CD8-positive, alpha-beta T cell (primary cell): ENCODE measurements at regions of chr15 and their contacts with region 1.

Region 1: DNA sequence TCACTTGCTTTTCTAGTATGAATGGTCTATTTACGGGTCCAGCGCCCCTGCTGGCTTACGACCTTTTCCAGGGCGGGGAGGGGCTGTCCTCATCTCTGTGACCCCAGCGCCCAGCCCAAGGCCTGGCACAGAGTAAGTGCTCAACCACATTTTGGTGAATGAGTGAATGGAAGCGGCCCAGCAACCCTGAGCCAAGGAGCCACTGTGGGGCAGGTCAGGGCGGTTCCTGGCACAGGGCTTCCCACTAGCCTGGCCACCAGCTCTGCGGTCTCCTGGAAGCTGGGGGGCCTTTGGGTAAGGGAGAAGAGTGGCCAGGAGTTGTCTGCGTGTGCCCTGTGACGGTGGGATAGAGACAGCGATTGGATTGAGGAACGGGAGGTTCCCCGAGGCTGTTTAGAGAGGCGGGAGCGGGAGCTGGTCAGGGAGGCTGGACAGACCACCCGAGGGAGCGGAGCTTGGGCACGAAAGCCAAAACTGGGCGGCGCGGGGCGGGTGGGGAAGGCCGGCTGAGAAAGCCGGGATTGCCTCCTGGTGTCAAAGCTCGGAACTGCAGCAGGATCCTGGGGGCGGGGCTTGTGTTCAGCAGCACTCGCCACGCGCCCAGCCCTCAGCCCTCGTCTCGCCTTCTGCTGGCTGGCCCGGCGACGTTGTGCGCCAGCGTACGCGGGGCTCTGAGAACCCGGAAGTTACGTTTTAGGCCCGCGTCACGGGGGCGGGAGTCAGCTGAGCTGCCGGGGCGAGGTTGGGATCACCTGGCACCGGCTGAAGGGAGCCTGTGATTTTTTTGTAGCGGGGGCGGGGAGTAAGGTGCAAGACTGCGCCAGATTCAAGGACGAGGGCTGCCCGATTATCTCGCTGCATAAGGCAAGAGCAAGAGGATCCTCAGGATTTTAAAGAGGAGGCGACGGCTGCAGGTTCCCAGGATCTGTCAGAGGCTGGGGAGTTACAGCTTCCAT is at the start of gene VPS18:
- DNase-seq: peak; percentile 97 to 99 (median 99)
- ATAC-seq: peak; percentile 97
- H3K4me3 ChIP-seq: peak within 1 kb of the TSS; percentile 85 to 98
- H3K4me3 Mint-ChIP-seq: peak within 1 kb of the TSS; percentile 98
- H3K27ac ChIP-seq: peak within 1 kb of the TSS; percentile 76 to 91
- H3K27ac Mint-ChIP-seq: peak within 1 kb of the TSS; percentile 96
- H3K4me1 ChIP-seq: peaks cover 19% of the 10 kb centered on the region
- H3K4me1 Mint-ChIP-seq: peaks cover 40% of the 10 kb centered on the region
- H3K27me3 ChIP-seq: no peaks in the 10 kb centered on the region
- H3K27me3 Mint-ChIP-seq: no peaks in the 10 kb centered on the region
- CTCF ChIP-seq: peak; percentile 88
- total RNA-seq, gene VPS18: 21.7 to 23.6 TPM

Region 2: GRCh38 chr15:40593588-40594428 is 300.2 kb before region 1 on chr15 and contains the start of gene KNL1:
- CTCF ChIA-PET with region 1: no interaction called
- POLR2A ChIA-PET with region 1: no interaction called
- intact Hi-C with region 1: loop called (anchors 1 to 10 kb)
- DNase-seq: peak; percentile 70 to 96 (median 85)
- ATAC-seq: peak; percentile 83
- H3K4me3 ChIP-seq: peak within 1 kb of the TSS; percentile 76 to 82
- H3K4me3 Mint-ChIP-seq: peak within 1 kb of the TSS; percentile 95
- H3K27ac ChIP-seq: peak within 1 kb of the TSS; percentile 78 to 92
- H3K27ac Mint-ChIP-seq: peak within 1 kb of the TSS; percentile 98
- H3K4me1 ChIP-seq: no peaks in the 10 kb centered on the region
- H3K4me1 Mint-ChIP-seq: peaks cover 20% of the 10 kb centered on the region
- H3K27me3 ChIP-seq: peaks cover 0 to 2% of the 10 kb centered on the region in 2 experiments
- H3K27me3 Mint-ChIP-seq: peaks cover 6% of the 10 kb centered on the region
- CTCF ChIP-seq: no peak
- total RNA-seq, gene KNL1: 0.83 to 0.98 TPM

Region 3: DNA sequence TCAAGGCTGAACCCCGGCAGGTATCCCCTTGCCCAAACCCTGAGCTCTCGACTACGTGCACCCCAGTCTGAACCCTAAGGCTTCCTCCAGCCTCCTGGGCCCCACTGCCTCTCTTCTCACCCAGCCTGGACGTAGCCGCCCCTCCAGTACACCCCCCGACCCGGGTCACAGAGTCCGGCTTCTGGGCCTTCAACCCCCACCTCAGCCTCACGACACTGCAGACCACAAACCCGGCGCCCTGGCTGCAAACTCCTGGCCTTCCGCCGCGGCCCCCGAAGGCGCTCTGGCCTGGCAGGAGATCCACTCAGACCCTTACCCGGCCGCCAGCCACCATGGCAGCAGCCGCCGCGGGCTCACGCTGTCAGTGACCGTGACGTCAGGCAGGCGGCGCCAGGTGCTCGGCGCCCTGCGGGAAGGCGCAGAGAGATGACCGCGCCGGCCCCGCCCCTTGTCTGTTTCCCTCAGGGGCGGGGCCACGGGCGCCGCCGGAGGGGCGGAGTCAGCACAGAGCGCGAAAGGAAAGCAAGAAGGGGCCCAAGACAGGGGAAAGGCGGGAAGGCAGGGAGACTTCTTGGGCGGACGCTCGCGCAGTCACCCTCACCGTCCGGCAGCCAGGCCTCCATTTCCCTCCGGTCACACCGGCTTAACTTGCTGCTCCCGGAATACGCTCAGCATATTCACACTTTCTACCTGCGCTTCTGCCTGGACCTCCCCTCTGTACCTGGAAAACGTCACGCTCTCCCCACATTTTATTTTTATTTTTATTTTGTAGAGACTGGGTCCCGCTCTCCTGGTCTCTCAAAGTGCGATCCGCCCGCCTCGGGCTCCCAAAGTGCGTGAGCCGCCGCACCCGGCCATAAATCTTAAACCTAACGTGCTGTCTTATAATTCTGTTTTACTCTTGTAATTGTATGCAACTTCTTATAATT is 138.9 kb before region 1 on chr15 and contains the start of gene RMDN3:
- CTCF ChIA-PET with region 1: interaction called, 4 read pairs
- POLR2A ChIA-PET with region 1: no interaction called
- intact Hi-C with region 1: loop called (anchors 1 to 2 kb)
- DNase-seq: peak; percentile 84 to 96 (median 93)
- ATAC-seq: peak; percentile 95
- H3K4me3 ChIP-seq: peak within 1 kb of the TSS; percentile 99
- H3K4me3 Mint-ChIP-seq: peak within 1 kb of the TSS; percentile 94
- H3K27ac ChIP-seq: peak within 1 kb of the TSS; percentile 91 to 94
- H3K27ac Mint-ChIP-seq: peak within 1 kb of the TSS; percentile 94
- H3K4me1 ChIP-seq: peaks cover 6% of the 10 kb centered on the region
- H3K4me1 Mint-ChIP-seq: peaks cover 26% of the 10 kb centered on the region
- H3K27me3 ChIP-seq: no peaks in the 10 kb centered on the region
- H3K27me3 Mint-ChIP-seq: no peaks in the 10 kb centered on the region
- CTCF ChIP-seq: no peak
- total RNA-seq, gene RMDN3: 26.7 to 30.5 TPM

Region 4: GRCh38 chr15:40881351-40881750 is 12.7 kb before region 1 on chr15:
- CTCF ChIA-PET with region 1: interaction called, 26 read pairs
- POLR2A ChIA-PET with region 1: interaction called, 4 read pairs
- intact Hi-C with region 1: no loop called
- DNase-seq: no peak
- ATAC-seq: no peak
- H3K4me3 ChIP-seq: no peak overlapping the region
- H3K4me3 Mint-ChIP-seq: no peak overlapping the region
- H3K27ac ChIP-seq: no peak overlapping the region
- H3K27ac Mint-ChIP-seq: no peak overlapping the region
- H3K4me1 ChIP-seq: peaks cover 13% of the 10 kb centered on the region
- H3K4me1 Mint-ChIP-seq: peaks cover 10% of the 10 kb centered on the region
- H3K27me3 ChIP-seq: peaks cover 0 to 9% of the 10 kb centered on the region in 2 experiments
- H3K27me3 Mint-ChIP-seq: peaks cover 6% of the 10 kb centered on the region
- CTCF ChIP-seq: no peak

Region 5: GRCh38 chr15:41116116-41116871 is 222.3 kb after region 1 on chr15 and contains the start of gene INO80:
- CTCF ChIA-PET with region 1: no interaction called
- POLR2A ChIA-PET with region 1: interaction called, 4 read pairs
- intact Hi-C with region 1: loop called in 1 of 2 experiments (anchors 1 kb)
- DNase-seq: peak; percentile 90 to 98 (median 96)
- ATAC-seq: peak; percentile 74
- H3K4me3 ChIP-seq: peak within 1 kb of the TSS; percentile 68 to 98
- H3K4me3 Mint-ChIP-seq: peak within 1 kb of the TSS; percentile 96
- H3K27ac ChIP-seq: peak within 1 kb of the TSS; percentile 83 to 96
- H3K27ac Mint-ChIP-seq: peak within 1 kb of the TSS; percentile 99
- H3K4me1 ChIP-seq: peaks cover 15% of the 10 kb centered on the region
- H3K4me1 Mint-ChIP-seq: peaks cover 28% of the 10 kb centered on the region
- H3K27me3 ChIP-seq: no peaks in the 10 kb centered on the region
- H3K27me3 Mint-ChIP-seq: no peaks in the 10 kb centered on the region
- CTCF ChIP-seq: no peak
- total RNA-seq, gene INO80: 19.7 to 24.2 TPM

Region 6: GRCh38 chr15:42207674-42208579 is 1313.9 kb after region 1 on chr15 and contains the start of gene VPS39:
- CTCF ChIA-PET with region 1: no interaction called
- POLR2A ChIA-PET with region 1: no interaction called
- intact Hi-C with region 1: loop called in 1 of 2 experiments (anchors 5 kb)
- DNase-seq: peak; percentile 65 to 90 (median 85)
- ATAC-seq: peak; percentile 98
- H3K4me3 ChIP-seq: peak within 1 kb of the TSS; percentile 73 to 96
- H3K4me3 Mint-ChIP-seq: peak within 1 kb of the TSS; percentile 97
- H3K27ac ChIP-seq: peak within 1 kb of the TSS; percentile 83 to 84
- H3K27ac Mint-ChIP-seq: peak within 1 kb of the TSS; percentile 95
- H3K4me1 ChIP-seq: peaks cover 23% of the 10 kb centered on the region
- H3K4me1 Mint-ChIP-seq: peaks cover 40% of the 10 kb centered on the region
- H3K27me3 ChIP-seq: no peaks in the 10 kb centered on the region
- H3K27me3 Mint-ChIP-seq: no peaks in the 10 kb centered on the region
- CTCF ChIP-seq: no peak
- total RNA-seq, gene VPS39: 81.5 to 82.9 TPM